ENCODE measurements at regions of chr6 and their contacts with region 1.

Region 1: GRCh38 chr6:52995913-52996645 is 995 bp upstream of the GSTA4 start:
- DNase-seq: peak; percentile 43 to 45
- H3K4me3 ChIP-seq: peak overlapping the region; percentile 20
- H3K4me3 Mint-ChIP-seq: peak overlapping the region; percentile 81
- H3K27ac Mint-ChIP-seq: peak overlapping the region; percentile 87
- H3K4me1 ChIP-seq: peaks cover 1% of the 10 kb centered on the region; the same call in 1 of the 2 replicates
- H3K4me1 Mint-ChIP-seq: peaks cover 13% of the 10 kb centered on the region
- H3K27me3 ChIP-seq: no peaks in the 10 kb centered on the region
- H3K27me3 Mint-ChIP-seq: no peaks in the 10 kb centered on the region
- CTCF ChIP-seq: no peak

Region 2: DNA sequence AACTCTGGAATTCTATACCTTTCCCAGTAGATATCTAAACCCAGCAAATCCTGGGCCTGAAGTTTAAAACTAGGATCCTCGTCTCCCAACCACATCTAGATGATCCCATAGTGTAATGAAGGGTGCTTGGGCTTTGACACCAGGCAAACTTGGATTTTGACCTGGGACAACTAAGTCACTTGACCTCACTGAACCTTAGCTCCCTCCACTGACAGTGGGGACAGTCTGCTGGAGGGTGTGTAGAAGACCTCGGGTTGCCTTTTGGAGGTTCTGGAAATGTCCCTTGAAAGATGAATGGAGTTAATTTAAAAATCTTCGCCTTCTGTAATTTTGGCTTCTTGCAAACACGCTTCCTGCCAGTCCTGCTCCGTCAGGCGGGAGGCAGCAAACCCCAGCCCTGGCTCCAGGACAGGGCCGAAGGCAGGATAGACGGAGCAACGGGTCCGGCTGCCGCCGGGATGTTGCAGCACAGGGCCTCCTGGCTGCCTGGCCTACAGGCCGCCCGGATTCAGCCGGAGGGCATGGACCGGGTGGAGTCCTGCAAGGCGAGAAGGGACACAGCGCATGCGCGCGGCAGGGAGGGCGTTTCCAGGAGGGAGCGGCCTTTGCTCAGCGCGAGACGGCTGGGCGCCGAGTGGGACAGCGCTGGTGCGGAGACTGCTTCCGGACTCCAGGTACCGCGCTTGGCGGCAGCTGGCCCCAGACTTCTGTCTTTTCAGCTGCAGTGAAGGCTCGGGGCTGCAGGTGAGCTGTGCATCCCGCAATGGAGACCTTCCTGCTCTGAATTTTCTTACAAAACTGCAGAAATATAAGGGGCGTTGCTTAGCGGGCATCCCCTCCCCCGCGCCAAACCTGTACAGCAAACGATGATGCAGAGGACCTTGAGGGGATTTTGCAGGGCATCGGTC is 325.3 kb before region 1 on chr6 and contains the start of gene TMEM14A:
- CTCF ChIA-PET with region 1: no interaction called
- POLR2A ChIA-PET with region 1: no interaction called
- intact Hi-C with region 1: loop called (anchors 10 kb)
- DNase-seq: peak; percentile 98 to 99
- H3K4me3 ChIP-seq: peak within 1 kb of the TSS; percentile 84
- H3K4me3 Mint-ChIP-seq: peak within 1 kb of the TSS; percentile 83
- H3K27ac Mint-ChIP-seq: peak within 1 kb of the TSS; percentile 77
- H3K4me1 ChIP-seq: peaks cover 25% of the 10 kb centered on the region
- H3K4me1 Mint-ChIP-seq: peaks cover 12% of the 10 kb centered on the region
- H3K27me3 ChIP-seq: no peaks in the 10 kb centered on the region
- H3K27me3 Mint-ChIP-seq: no peaks in the 10 kb centered on the region
- CTCF ChIP-seq: peak in 1 of 2 experiments; percentile 0
- total RNA-seq, gene TMEM14A: 39.9 and 41.9 TPM in 2 replicates

Region 3: DNA sequence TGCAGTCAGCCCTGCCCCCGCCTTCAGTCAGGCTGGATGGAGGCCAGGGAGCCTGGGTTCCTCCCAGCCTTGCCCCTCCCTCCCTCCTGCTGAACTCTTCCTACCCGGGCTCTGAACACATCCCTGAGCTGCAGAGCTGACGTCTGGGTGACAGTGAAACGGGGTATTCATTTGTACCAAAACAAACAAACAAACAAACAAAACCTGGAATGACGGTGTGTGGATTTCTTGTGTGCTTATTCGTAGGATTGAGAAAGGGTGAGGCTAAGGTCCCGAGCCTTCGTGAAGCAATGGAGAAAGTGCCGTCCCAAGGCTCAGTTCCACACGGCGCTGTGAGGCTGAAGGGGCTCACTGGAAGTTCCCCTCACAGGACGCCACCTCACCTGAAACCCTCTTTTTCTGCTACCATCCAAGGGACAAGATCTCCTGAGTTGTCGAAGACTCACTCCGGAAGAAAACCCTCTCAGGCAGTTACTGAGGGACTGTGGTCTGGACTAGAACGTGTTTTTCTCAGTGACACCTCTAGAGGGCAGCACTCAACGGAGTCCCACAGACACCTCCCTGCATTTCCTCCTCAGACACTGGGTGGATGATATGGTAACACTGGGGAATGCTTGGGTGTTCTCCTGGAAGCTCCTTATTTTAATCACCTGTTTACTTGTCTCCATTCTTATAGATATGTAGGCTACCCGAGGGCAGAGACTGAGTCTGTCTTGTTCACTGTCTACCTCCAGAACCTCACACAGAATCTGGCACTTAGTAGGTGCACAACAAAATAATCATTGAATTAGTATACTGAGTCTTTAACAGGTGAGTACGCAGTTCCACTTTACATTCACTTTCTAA is 113.9 kb before region 1 on chr6:
- CTCF ChIA-PET with region 1: interaction called, 4 read pairs
- POLR2A ChIA-PET with region 1: no interaction called
- intact Hi-C with region 1: loop called (anchors 1 kb)
- DNase-seq: peak; percentile 76 to 79
- H3K4me3 ChIP-seq: peak overlapping the region; percentile 48
- H3K4me3 Mint-ChIP-seq: peak overlapping the region; percentile 71
- H3K27ac Mint-ChIP-seq: peak overlapping the region; percentile 85
- H3K4me1 ChIP-seq: 0 out of 2 replicates have a peak, but pooled peaks cover 4% of the 10 kb centered on the region
- H3K4me1 Mint-ChIP-seq: no peaks in the 10 kb centered on the region
- H3K27me3 ChIP-seq: no peaks in the 10 kb centered on the region
- H3K27me3 Mint-ChIP-seq: no peaks in the 10 kb centered on the region
- CTCF ChIP-seq: peak; percentile 79 to 84

Region 4: GRCh38 chr6:52922161-52922560 is 73.9 kb before region 1 on chr6:
- CTCF ChIA-PET with region 1: no interaction called
- POLR2A ChIA-PET with region 1: no interaction called
- intact Hi-C with region 1: loop called (anchors 1 kb)
- DNase-seq: no peak
- H3K4me3 ChIP-seq: no peak overlapping the region
- H3K4me3 Mint-ChIP-seq: no peak overlapping the region
- H3K27ac Mint-ChIP-seq: no peak overlapping the region
- H3K4me1 ChIP-seq: peaks cover 44% of the 10 kb centered on the region
- H3K4me1 Mint-ChIP-seq: peaks cover 50% of the 10 kb centered on the region
- H3K27me3 ChIP-seq: no peaks in the 10 kb centered on the region
- H3K27me3 Mint-ChIP-seq: no peaks in the 10 kb centered on the region
- CTCF ChIP-seq: no peak

Region 5: GRCh38 chr6:52946306-52946705 is 49.8 kb before region 1 on chr6:
- CTCF ChIA-PET with region 1: interaction called, 3 read pairs
- POLR2A ChIA-PET with region 1: interaction called, 5 read pairs
- intact Hi-C with region 1: loop called (anchors 2 kb)
- DNase-seq: peak; percentile 78 to 82
- H3K4me3 ChIP-seq: no peak overlapping the region
- H3K4me3 Mint-ChIP-seq: peak overlapping the region; percentile 49
- H3K27ac Mint-ChIP-seq: peak overlapping the region; percentile 76
- H3K4me1 ChIP-seq: peaks cover 59% of the 10 kb centered on the region
- H3K4me1 Mint-ChIP-seq: peaks cover 43% of the 10 kb centered on the region
- H3K27me3 ChIP-seq: no peaks in the 10 kb centered on the region
- H3K27me3 Mint-ChIP-seq: no peaks in the 10 kb centered on the region
- CTCF ChIP-seq: no peak

Region 6: DNA sequence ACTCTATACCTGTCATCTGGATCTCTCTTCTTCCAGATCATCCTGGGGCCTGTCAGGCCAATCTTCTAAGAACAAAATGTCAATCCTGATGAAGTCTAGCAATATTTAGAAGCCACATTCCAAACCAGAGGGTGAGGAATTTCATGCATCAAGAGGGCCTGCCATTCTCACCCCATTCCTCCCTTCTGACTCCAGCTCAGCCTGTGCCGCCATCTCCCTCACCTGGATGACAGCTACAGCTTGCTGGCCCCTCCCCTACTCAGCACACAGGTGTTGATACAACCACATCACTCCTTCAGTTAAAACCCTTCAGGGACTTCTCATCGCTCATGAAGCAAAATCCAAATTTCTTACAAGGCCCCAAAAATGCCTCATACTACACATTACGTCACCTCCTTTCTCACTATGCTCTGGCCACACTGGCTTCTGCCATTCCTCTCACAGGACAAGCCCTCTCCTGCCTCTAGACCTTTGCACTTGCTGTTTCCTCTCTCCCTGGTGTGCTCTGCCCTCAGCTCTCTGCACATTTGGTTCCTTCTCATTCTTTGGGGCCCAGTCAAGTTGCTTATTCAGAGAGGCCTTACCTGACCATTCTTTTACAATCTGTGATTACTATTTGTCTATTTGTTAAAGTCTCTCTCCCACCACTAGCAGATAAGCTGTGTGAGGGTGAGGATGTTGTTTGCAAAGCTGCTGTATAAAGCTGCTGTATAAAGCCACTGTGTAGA is 14.3 kb after region 1 on chr6:
- CTCF ChIA-PET with region 1: interaction called, 6 read pairs
- POLR2A ChIA-PET with region 1: interaction called, 3 read pairs
- intact Hi-C with region 1: loop called (anchors 1 kb)
- DNase-seq: peak; percentile 33 to 46
- H3K4me3 ChIP-seq: no peak overlapping the region
- H3K4me3 Mint-ChIP-seq: peak overlapping the region; percentile 3
- H3K27ac Mint-ChIP-seq: peak overlapping the region; percentile 2
- H3K4me1 ChIP-seq: peaks cover 45% of the 10 kb centered on the region
- H3K4me1 Mint-ChIP-seq: peaks cover 14% of the 10 kb centered on the region
- H3K27me3 ChIP-seq: no peaks in the 10 kb centered on the region
- H3K27me3 Mint-ChIP-seq: no peaks in the 10 kb centered on the region
- CTCF ChIP-seq: no peak

Region 7: DNA sequence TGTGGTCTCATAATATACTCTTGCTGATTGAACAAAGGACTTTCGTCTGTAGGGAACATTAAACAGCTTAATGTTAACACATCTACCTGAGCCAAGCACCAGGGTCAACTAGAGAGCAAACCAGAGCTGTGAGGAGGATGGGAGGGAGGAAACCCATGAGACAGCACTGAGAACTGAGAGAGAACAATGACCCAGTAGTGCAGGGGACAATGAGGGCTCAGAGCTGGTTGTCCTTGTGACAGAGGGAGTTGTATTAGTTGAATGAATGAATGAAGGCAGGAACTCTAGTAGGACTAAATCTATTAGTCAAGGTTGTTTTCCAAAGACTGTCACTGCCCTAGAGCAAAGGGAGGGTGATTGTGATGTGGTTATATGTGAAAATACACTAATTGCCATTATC is 27.2 kb after region 1 on chr6:
- CTCF ChIA-PET with region 1: no interaction called
- POLR2A ChIA-PET with region 1: no interaction called
- intact Hi-C with region 1: no loop called
- DNase-seq: no peak
- H3K4me3 ChIP-seq: no peak overlapping the region
- H3K4me3 Mint-ChIP-seq: no peak overlapping the region
- H3K27ac Mint-ChIP-seq: no peak overlapping the region
- H3K4me1 ChIP-seq: no peaks in the 10 kb centered on the region
- H3K4me1 Mint-ChIP-seq: peaks cover 6% of the 10 kb centered on the region
- H3K27me3 ChIP-seq: no peaks in the 10 kb centered on the region
- H3K27me3 Mint-ChIP-seq: no peaks in the 10 kb centered on the region
- CTCF ChIP-seq: no peak

Measured in Caco-2 (cell line).